Activated CD4-positive, alpha-beta T cell treated with anti-CD3 and anti-CD28 coated beads for 36 hours (primary cell): ENCODE measurements at regions of chr11 and their contacts with region 1.

Region 1: DNA sequence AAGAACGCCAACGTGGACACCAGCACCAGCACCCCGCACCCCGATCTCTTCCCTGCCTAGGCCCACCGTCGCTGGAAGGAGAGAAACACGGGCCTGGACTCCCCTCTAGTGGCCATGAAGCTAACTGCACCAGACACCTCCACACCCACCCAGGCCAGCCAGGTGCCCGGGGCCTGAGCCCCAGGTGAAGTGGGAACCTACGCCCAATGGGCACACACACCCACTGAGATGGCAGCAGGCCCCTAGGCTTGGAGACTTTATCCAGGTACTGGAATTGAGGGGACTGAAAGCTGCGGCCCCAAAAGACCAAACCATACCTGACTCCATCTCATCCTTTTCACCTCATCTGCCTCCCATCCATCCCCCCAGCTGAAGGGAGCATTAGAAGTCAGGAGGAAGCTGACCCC is 81.0 kb downstream of the BUD13 start:
- DNase-seq: peak; percentile 77
- ATAC-seq: peak; percentile 89
- H3K4me3 Mint-ChIP-seq: no peak overlapping the region
- H3K27ac Mint-ChIP-seq: no peak overlapping the region
- H3K4me1 Mint-ChIP-seq: no peaks in the 10 kb centered on the region
- H3K27me3 Mint-ChIP-seq: peaks cover 3% of the 10 kb centered on the region

Region 2: DNA sequence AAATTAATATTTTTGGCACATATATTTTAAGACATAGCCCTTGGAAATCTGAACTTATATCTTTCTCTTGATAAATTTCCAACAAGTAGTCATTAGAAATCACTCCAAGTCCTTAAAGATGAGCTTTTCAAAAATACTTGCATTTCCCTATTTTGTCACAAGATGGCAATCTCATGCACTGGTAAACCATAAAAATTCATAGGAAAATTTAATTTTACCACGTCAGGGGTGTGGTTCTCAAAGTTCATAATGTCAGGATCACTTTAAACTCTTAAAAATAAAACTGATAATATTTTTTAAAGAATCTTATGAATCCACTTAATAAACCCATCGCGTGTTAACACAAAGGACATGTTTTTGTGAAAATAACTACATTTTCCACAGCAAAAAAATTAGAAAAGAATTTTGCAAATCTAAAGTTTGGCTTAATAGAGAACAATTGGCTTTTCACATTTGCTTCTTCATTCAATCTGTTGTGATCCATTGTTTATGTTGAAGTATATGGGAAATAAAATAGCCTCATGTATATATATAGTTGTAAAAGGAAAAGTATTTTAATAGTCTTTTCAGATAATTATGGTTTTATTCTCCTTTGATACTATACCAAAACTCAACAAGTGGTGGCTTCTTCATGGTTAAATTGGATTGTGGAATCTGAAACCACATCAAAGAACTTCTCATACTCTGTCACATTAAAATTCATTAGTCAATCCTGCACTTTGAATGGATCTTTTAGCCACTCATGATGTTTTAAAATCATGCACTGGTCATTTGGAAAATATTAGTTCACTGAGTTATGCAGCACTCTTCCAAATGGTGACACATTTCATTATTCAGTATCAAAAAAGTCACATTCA is 1356.6 kb before region 1 on chr11:
- CTCF ChIA-PET with region 1: interaction called, 5 read pairs
- POLR2A ChIA-PET with region 1: no interaction called
- intact Hi-C with region 1: loop called in 1 of 2 experiments (anchors 2 kb)
- DNase-seq: no peak
- ATAC-seq: no peak
- H3K4me3 Mint-ChIP-seq: no peak overlapping the region
- H3K27ac Mint-ChIP-seq: no peak overlapping the region
- H3K4me1 Mint-ChIP-seq: no peaks in the 10 kb centered on the region
- H3K27me3 Mint-ChIP-seq: peaks cover 3% of the 10 kb centered on the region

Region 3: DNA sequence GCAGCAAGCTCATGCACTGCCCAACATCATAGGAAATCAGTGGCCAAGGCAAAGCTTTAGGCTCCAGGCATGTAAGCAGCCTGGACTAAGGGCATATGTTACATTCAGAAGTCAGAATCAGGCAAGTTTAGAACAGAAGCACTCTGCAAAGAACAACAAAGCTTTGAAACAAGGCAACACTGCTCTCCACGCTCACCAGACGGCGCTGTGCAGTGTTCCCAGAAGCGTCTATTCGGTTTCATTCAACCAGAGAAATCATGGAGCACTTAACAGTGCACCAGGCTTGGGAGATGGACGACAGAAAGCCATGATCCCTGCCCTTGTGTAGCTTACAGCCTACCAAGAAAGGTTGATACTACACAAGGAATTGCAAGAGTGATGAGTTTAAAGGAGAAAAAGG is 474.8 kb before region 1 on chr11:
- CTCF ChIA-PET with region 1: interaction called, 3 read pairs
- POLR2A ChIA-PET with region 1: no interaction called
- intact Hi-C with region 1: loop called in 1 of 2 experiments (anchors 1 kb)
- DNase-seq: peak; percentile 53
- ATAC-seq: no peak
- H3K4me3 Mint-ChIP-seq: no peak overlapping the region
- H3K27ac Mint-ChIP-seq: no peak overlapping the region
- H3K4me1 Mint-ChIP-seq: no peaks in the 10 kb centered on the region
- H3K27me3 Mint-ChIP-seq: peaks cover 4% of the 10 kb centered on the region

Region 4: DNA sequence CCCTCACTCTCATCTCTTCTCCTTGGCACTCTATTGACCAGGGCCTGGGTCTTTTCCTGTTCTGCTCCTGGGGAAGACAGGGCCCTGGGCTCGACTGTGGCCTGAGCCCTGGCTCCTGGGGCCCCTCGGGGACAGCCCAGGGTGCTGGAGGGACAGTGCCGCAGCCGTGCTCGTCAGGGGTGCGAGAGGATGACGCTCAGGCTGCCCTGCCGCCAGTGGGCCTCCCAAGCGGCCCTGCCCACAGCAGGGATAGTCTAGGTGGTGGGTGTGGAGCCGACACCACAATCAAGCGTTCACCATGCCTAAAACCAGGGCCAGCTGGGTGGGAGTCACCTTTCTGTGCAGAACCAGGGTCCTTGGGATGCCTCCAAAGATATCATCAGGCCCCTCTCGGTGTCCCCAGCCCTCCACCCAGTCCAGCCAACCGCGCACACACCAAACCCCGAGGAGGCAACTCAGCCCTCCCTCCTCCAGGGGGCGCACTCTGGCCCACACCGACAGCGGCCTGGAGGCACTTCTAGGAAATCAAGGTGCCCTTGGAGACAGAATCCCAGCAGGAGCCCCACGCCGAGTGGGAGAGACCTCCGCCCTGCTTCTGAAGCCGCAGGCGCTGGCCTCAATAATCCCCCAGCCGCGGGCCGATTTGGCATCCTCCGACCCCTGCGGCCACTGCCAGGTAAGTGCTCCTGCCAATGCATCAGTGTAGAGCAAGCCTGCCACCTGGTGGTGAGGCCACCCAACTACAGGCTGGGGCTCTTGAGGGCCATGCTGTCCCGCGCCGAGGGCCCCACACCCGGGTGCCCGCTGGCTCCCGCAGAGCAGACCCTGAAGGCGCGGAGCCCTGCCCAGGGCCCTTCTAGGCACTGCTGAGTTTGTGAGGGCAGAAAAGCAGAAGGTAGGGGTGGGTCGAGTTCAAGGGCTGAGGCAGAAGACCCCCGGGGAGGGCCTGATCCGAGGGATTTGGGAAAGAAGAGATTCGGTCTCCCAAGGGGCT is 415.4 kb before region 1 on chr11:
- CTCF ChIA-PET with region 1: no interaction called
- POLR2A ChIA-PET with region 1: no interaction called
- intact Hi-C with region 1: loop called in 1 of 2 experiments (anchors 1 kb)
- DNase-seq: peak; percentile 90
- ATAC-seq: peak; percentile 94
- H3K4me3 Mint-ChIP-seq: no peak overlapping the region
- H3K27ac Mint-ChIP-seq: no peak overlapping the region
- H3K4me1 Mint-ChIP-seq: no peaks in the 10 kb centered on the region
- H3K27me3 Mint-ChIP-seq: peaks cover 17% of the 10 kb centered on the region

Region 5: DNA sequence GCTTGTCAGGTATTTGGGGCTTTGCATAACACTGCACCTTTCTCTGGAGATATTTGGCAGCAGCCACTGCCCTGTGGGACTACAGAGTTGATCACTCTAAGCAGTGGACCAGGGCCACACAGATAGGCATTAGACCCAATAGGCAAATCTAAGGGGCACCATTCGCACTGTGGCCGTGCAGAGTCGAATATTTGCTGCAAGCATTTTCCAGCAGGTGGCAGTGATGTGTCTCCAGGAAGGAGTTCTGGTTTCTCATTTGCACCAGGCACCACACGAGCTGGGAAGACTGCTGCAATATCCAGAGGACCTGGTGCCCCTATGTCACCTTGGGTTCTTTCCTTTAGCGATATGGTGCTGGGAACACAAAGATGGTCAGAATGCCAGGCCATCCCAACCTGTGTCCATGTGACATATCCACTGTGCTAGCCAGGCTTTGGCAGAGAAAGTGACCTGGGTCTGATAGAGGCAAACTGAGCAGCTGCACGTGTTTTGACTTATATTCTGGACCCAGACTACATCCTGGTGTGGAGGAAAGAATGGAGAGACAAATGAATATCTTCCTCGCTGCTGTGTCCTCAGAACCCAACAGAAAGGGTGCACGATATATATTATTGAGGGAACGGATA is 237.6 kb before region 1 on chr11:
- CTCF ChIA-PET with region 1: interaction called, 3 read pairs
- POLR2A ChIA-PET with region 1: no interaction called
- intact Hi-C with region 1: loop called (anchors 1 to 2 kb)
- DNase-seq: peak; percentile 54
- ATAC-seq: no peak
- H3K4me3 Mint-ChIP-seq: no peak overlapping the region
- H3K27ac Mint-ChIP-seq: no peak overlapping the region
- H3K4me1 Mint-ChIP-seq: no peaks in the 10 kb centered on the region
- H3K27me3 Mint-ChIP-seq: peaks cover 14% of the 10 kb centered on the region

Region 6: GRCh38 chr11:116513894-116514293 is 177.9 kb before region 1 on chr11:
- CTCF ChIA-PET with region 1: interaction called, 12 read pairs
- POLR2A ChIA-PET with region 1: no interaction called
- intact Hi-C with region 1: loop called (anchors 1 to 5 kb)
- DNase-seq: peak; percentile 61
- ATAC-seq: no peak
- H3K4me3 Mint-ChIP-seq: no peak overlapping the region
- H3K27ac Mint-ChIP-seq: no peak overlapping the region
- H3K4me1 Mint-ChIP-seq: no peaks in the 10 kb centered on the region
- H3K27me3 Mint-ChIP-seq: peaks cover 20% of the 10 kb centered on the region

Region 7: DNA sequence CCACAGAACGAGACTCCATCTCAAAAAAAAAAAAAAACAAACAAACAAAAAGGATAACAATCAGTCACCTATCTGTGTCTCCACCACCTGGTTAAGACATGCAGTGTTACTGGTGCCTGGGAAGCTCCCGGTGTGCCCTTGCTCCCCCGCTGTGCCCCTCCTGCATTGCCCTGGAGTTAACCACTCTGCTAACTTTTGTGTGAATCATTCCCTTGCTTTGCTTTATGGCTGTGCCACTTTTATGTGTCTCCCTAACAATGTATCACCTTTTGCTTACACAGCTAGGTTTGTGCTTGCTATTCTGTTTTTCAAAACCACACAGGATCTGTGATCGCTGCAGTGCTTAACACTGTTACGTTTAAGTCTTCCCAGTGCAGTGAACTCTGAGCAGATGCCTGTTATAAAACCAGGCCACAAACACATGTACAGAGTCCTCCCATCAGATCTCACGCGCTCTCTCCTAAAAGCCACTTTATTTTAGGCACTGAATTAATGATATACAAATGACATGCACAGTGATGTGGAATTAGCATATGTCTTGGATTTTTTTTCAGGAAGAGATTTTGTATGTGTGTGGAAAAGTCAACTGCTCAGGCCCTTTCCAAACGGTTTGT is 11.1 kb after region 1 on chr11:
- CTCF ChIA-PET with region 1: interaction called, 14 read pairs
- POLR2A ChIA-PET with region 1: no interaction called
- intact Hi-C with region 1: no loop called
- DNase-seq: no peak
- ATAC-seq: no peak
- H3K4me3 Mint-ChIP-seq: no peak overlapping the region
- H3K27ac Mint-ChIP-seq: no peak overlapping the region
- H3K4me1 Mint-ChIP-seq: no peaks in the 10 kb centered on the region
- H3K27me3 Mint-ChIP-seq: peaks cover 10% of the 10 kb centered on the region

Region 8: DNA sequence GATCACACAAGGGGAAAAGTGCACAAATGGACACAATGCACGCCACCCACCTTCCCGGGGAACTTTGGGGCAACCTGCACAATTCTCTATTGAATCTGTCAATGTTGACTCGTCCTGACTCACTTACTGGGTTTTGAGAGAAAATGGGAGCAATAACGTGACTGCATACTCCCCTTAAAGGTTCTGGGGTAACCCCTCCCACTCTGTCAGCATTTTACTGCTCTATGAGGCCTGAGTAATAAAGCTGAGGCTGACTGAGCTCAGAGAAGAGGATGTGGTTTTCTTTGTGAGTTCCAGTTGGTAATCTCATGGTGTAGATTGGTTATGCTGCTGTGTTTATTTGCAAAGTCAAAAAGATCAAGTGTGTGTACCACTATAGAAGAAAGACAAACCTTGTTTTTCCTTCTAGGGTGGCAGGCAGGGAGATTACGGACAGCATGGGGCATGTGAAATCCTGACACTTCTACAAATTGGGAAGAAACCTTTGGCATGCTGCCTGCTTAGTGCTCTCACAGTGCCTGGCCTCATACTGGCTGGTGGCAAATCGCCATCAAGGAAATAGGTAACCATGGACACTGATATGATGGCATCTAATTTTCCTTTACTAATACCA is 161.8 kb after region 1 on chr11:
- CTCF ChIA-PET with region 1: no interaction called
- POLR2A ChIA-PET with region 1: no interaction called
- intact Hi-C with region 1: no loop called
- DNase-seq: peak; percentile 70
- ATAC-seq: peak; percentile 92
- H3K4me3 Mint-ChIP-seq: peak overlapping the region; percentile 51
- H3K27ac Mint-ChIP-seq: peak overlapping the region; percentile 90
- H3K4me1 Mint-ChIP-seq: peaks cover 70% of the 10 kb centered on the region
- H3K27me3 Mint-ChIP-seq: no peaks in the 10 kb centered on the region

Region 9: GRCh38 chr11:116895048-116895757 is 203.4 kb after region 1 on chr11:
- CTCF ChIA-PET with region 1: no interaction called
- POLR2A ChIA-PET with region 1: no interaction called
- intact Hi-C with region 1: no loop called
- DNase-seq: peak; percentile 28
- ATAC-seq: no peak
- H3K4me3 Mint-ChIP-seq: no peak overlapping the region
- H3K27ac Mint-ChIP-seq: peak overlapping the region; percentile 3
- H3K4me1 Mint-ChIP-seq: peaks cover 17% of the 10 kb centered on the region
- H3K27me3 Mint-ChIP-seq: no peaks in the 10 kb centered on the region